Sigmoid colon (tissue), 7 donors: ENCODE measurements at regions of chr10 and their contacts with region 1.

Region 1: DNA sequence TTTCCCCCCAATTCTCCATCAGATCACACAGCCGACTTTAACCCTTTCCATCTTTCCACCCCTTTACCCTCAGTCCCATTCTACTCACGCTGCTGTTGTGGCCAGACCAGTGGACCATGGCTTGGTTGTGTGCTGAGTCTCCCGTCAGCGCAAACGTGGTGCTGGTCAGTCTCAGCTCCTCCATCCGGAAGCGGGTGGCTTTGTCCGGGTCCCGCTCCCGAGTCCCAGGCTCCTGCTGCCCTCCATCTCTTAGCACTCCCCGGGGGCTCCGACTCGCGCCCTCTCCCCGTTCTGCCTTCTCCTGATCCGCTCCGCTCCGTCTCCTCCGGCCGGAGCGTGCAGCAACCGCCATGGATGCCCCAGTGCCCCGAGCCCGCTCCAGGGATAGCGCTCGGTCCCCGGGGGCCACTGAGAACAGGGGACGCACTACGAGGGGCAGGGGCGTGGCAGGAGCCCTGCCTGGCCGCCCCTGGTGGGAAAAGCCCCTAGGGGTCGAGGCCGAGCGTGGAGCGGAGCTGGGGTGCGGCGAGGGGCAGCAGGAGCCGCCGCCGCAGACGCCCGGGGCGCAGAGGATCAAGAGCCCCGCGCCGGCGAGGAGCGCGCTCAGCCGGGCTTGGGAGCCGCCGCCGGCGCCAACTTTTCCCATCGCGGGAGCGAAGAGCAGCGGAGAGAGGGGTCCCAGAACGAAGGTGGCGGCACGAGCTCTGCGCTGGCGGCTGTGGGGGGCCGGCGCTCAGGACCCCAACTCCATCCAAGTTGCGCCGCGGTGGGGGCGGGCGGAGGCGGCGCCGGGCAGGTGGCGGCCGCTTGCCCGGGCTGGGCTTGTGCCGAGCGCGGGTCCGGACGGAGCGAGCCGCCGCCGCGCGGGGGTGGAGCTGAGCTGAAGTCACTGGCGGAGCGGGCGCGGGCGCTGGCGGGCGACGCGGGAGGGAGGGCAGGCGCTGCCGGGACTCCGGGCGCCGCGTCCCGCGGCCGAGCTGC is at the start of gene SORCS1:
- DNase-seq: peak; percentile 78
- H3K4me3 ChIP-seq: peak within 1 kb of the TSS; percentile 45 to 63 (median 55)
- H3K27ac ChIP-seq: peak within 1 kb of the TSS; percentile 46 to 66 (median 60)
- H3K4me1 ChIP-seq: peaks cover 0 to 25% (median 10%) of the 10 kb centered on the region in 4 donors
- H3K27me3 ChIP-seq: peaks cover 0 to 44% (median 0%) of the 10 kb centered on the region in 3 donors
- CTCF ChIP-seq: no peak
- EP300 ChIP-seq: no peak
- POLR2A ChIP-seq: no peak
- total RNA-seq, gene SORCS1: 6.8 to 18.3 (median 13.8) TPM

Region 2: GRCh38 chr10:106705681-106706100 is 458.5 kb before region 1 on chr10:
- intact Hi-C with region 1: loop called (anchors 5 kb)
- DNase-seq: peak; percentile 81
- H3K4me3 ChIP-seq: no peak overlapping the region
- H3K27ac ChIP-seq: no peak overlapping the region
- H3K4me1 ChIP-seq: peaks cover 0 to 3% (median 0%) of the 10 kb centered on the region in 4 donors
- H3K27me3 ChIP-seq: no peaks in the 10 kb centered on the region
- CTCF ChIP-seq: peak; percentile 25 to 73 (median 61)
- EP300 ChIP-seq: no peak
- POLR2A ChIP-seq: no peak

Region 3: DNA sequence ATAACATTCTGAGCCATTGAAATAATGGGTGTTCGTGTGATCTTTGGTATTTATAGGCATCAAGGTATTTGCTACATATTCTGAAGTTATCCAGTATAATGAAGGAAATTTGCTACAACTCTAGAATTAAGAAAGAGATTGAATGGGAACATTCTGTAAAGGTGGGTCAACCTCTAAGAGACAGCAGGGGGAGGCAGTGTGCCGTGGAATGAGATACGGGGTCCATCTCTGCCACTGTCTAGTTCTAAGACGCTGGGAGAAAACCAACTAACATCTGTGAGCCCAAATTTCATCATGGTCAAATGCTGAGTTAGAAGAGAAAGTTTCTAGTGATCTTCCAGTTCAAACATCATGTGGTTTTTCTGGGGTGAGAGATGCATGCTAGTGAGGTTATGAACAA is 368.6 kb before region 1 on chr10:
- intact Hi-C with region 1: loop called (anchors 5 kb)
- DNase-seq: peak; percentile 77
- H3K4me3 ChIP-seq: no peak overlapping the region
- H3K27ac ChIP-seq: no peak overlapping the region
- H3K4me1 ChIP-seq: peaks cover 0 to 15% (median 0%) of the 10 kb centered on the region in 4 donors
- H3K27me3 ChIP-seq: no peaks in the 10 kb centered on the region
- CTCF ChIP-seq: peak; percentile 34 to 65 (median 52)
- EP300 ChIP-seq: no peak
- POLR2A ChIP-seq: no peak

Region 4: GRCh38 chr10:106897719-106898118 is 266.5 kb before region 1 on chr10:
- intact Hi-C with region 1: loop called (anchors 5 kb)
- DNase-seq: peak; percentile 89
- H3K4me3 ChIP-seq: no peak overlapping the region
- H3K27ac ChIP-seq: peak overlapping the region in 2 of 4 donors; percentile 43 to 45
- H3K4me1 ChIP-seq: peaks cover 0 to 40% (median 15%) of the 10 kb centered on the region in 4 donors
- H3K27me3 ChIP-seq: no peaks in the 10 kb centered on the region
- CTCF ChIP-seq: no peak
- EP300 ChIP-seq: no peak
- POLR2A ChIP-seq: no peak

Region 5: DNA sequence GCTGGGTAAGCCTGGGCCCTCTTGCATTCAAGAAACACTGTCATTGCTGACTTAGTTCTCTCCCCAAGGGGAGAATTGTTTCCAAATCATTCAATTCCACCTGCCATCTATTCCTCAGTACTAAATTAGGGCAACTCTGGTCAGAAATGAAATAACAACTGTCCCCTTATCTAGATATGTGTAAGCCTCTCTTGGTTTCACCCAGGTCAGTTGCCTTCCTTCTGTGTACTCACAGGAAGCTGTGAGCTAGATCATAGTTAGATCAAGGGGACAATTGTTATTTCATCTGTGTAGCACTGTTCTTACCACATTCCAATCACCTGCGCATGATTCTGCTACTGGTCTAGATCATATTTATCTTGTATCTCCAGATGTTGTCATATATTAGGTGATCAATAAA is 483.3 kb after region 1 on chr10:
- intact Hi-C with region 1: no loop called
- DNase-seq: no peak
- H3K4me3 ChIP-seq: no peak overlapping the region
- H3K27ac ChIP-seq: no peak overlapping the region
- H3K4me1 ChIP-seq: no peaks in the 10 kb centered on the region
- H3K27me3 ChIP-seq: no peaks in the 10 kb centered on the region
- CTCF ChIP-seq: no peak
- EP300 ChIP-seq: no peak
- POLR2A ChIP-seq: no peak

Region 6: GRCh38 chr10:107814865-107815487 is 650.8 kb after region 1 on chr10:
- intact Hi-C with region 1: loop called (anchors 10 kb)
- DNase-seq: peak; percentile 75
- H3K4me3 ChIP-seq: no peak overlapping the region
- H3K27ac ChIP-seq: no peak overlapping the region
- H3K4me1 ChIP-seq: no peaks in the 10 kb centered on the region
- H3K27me3 ChIP-seq: no peaks in the 10 kb centered on the region
- CTCF ChIP-seq: peak; percentile 33 to 57 (median 46)
- EP300 ChIP-seq: no peak
- POLR2A ChIP-seq: no peak